CD14-positive monocyte (primary cell): ENCODE measurements at regions of chr17 and their contacts with region 1.

Region 1: GRCh38 chr17:40317880-40318829 is 9.2 kb downstream of the RARA start:
- DNase-seq: peak; percentile 94 to 96 (median 95)
- H3K4me3 ChIP-seq: peak overlapping the region; percentile 75 to 100 (median 100)
- H3K4me3 Mint-ChIP-seq: peak overlapping the region; percentile 99
- H3K27ac ChIP-seq: peak overlapping the region; percentile 99 to 100
- H3K27ac Mint-ChIP-seq: peak overlapping the region; percentile 99 to 100 (median 100)
- H3K4me1 ChIP-seq: peaks cover 65 to 69% of the 10 kb centered on the region in 2 donors
- H3K4me1 Mint-ChIP-seq: peaks cover 55% of the 10 kb centered on the region
- H3K27me3 ChIP-seq: no peaks in the 10 kb centered on the region
- H3K27me3 Mint-ChIP-seq: peaks cover 0 to 14% (median 7%) of the 10 kb centered on the region in 3 donors
- CTCF ChIP-seq: no peak

Region 2: DNA sequence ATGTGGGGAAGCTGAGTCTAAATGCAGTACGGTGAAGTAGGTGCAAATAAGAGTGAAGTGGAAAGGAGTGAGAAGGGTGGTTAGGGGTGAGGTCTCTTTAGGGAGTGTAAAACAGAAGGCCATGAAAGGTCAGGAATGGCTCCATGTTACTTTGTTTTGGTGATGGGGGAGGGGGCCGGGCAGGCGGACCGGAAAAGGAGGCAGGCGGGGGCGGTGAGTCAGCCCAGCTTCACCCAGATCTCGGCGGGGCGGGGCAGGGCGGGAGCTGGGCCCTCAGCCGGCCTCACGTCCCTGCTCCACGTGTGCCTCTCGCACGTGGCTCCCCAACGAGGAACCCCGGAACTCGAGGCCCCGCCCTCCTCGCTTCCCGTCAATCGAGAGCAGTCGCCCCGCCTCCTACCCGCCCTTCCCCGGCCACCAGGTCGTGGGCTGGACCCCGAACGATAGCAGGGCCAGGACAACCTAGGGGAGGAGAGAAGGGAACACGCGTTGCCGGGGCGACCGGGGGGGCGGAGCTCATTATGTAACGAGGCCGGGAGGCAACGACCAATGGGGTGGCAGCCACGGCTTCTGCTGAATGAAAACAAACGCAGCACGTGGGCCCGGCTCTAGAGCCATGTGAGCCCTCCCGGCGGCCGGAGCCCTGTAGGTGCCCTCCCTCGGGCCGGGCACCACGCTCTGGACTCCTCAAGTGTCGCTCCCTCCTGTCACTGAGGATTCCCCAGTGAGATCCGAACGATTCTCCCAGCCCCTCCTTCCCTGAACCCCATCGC is 219.1 kb before region 1 on chr17:
- intact Hi-C with region 1: loop called (anchors 2 to 5 kb)
- DNase-seq: peak; percentile 99 to 100 (median 100)
- H3K4me3 ChIP-seq: peak overlapping the region; percentile 35 to 78 (median 36)
- H3K4me3 Mint-ChIP-seq: peak overlapping the region; percentile 87 to 95
- H3K27ac ChIP-seq: peak overlapping the region; percentile 78 to 98
- H3K27ac Mint-ChIP-seq: peak overlapping the region; percentile 96 to 99 (median 98)
- H3K4me1 ChIP-seq: peaks cover 68 to 70% of the 10 kb centered on the region in 2 donors
- H3K4me1 Mint-ChIP-seq: peaks cover 79% of the 10 kb centered on the region
- H3K27me3 ChIP-seq: no peaks in the 10 kb centered on the region
- H3K27me3 Mint-ChIP-seq: peaks cover 0 to 5% (median 0%) of the 10 kb centered on the region in 3 donors
- CTCF ChIP-seq: no peak

Region 3: GRCh38 chr17:40279407-40279806 is 38.7 kb before region 1 on chr17:
- intact Hi-C with region 1: no loop called
- DNase-seq: no peak
- H3K4me3 ChIP-seq: no peak overlapping the region
- H3K4me3 Mint-ChIP-seq: no peak overlapping the region
- H3K27ac ChIP-seq: peak overlapping the region in 1 of 2 donors; percentile 36
- H3K27ac Mint-ChIP-seq: peak overlapping the region in 2 of 7 donors; percentile 36 to 67
- H3K4me1 ChIP-seq: peaks cover 18% of the 10 kb centered on the region in 2 donors
- H3K4me1 Mint-ChIP-seq: peaks cover 13% of the 10 kb centered on the region
- H3K27me3 ChIP-seq: no peaks in the 10 kb centered on the region
- H3K27me3 Mint-ChIP-seq: no peaks in the 10 kb centered on the region
- CTCF ChIP-seq: no peak

Region 4: DNA sequence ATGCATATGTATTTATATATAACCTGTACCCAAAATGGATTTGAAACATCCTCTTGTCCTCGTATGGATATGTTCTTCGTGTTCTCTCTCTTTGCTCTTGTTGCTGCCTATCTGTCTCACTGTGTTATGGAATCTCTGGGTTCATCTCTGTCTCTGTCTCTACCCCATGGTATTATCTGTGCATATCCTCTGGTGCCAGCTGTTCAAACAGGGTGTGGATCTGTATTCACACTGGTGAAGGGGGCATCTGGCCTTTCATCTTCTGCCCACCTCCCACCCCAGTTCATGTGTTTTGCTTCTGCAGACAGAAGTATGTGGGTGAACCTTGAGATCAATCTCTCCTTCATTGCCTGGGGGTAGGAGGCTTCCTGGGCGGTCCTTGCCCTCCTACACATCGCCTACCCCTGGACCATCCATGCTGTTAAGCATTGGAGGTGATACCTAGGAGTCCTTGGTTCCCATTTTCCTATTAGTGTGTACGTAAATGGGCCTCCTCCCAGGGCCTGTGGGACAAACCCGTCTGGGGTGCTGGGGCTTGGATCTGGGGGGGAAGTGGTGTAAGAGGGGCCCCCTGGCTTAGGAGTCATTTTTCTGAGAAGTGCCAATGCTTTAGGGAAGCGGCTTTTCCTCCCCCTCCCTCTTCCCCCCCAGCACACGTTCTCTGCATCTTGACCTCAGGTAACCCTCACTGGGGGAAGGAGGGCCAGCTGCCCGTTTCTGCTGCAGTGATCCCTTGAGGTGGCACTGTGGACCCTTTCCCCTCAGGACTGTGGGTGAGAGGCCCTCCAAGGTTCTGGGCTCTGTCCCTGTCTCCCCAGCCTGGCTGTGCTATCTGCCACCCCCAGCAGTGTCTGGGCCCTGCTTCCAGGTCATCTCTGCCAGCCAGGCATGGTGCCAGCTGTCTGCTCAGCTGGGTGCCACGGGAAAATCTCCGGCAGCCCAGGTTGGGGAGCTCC is 12.0 kb after region 1 on chr17:
- intact Hi-C with region 1: loop called in 1 of 2 experiments (anchors 1 kb)
- DNase-seq: peak; percentile 86 to 91 (median 88)
- H3K4me3 ChIP-seq: peak overlapping the region; percentile 1 to 69 (median 24)
- H3K4me3 Mint-ChIP-seq: peak overlapping the region; percentile 75 to 78
- H3K27ac ChIP-seq: peak overlapping the region; percentile 74 to 100
- H3K27ac Mint-ChIP-seq: peak overlapping the region; percentile 93 to 100 (median 99)
- H3K4me1 ChIP-seq: peaks cover 100% of the 10 kb centered on the region in 2 donors
- H3K4me1 Mint-ChIP-seq: peaks cover 97% of the 10 kb centered on the region
- H3K27me3 ChIP-seq: no peaks in the 10 kb centered on the region
- H3K27me3 Mint-ChIP-seq: peaks cover 0 to 3% (median 1%) of the 10 kb centered on the region in 3 donors
- CTCF ChIP-seq: no peak

Region 5: GRCh38 chr17:40340880-40341807 is 23.0 kb after region 1 on chr17:
- intact Hi-C with region 1: loop called (anchors 2 kb)
- DNase-seq: peak; percentile 97 to 98 (median 98)
- H3K4me3 ChIP-seq: peak overlapping the region; percentile 66 to 99 (median 90)
- H3K4me3 Mint-ChIP-seq: peak overlapping the region; percentile 84 to 99
- H3K27ac ChIP-seq: peak overlapping the region; percentile 94 to 97
- H3K27ac Mint-ChIP-seq: peak overlapping the region; percentile 88 to 97 (median 95)
- H3K4me1 ChIP-seq: peaks cover 81 to 83% of the 10 kb centered on the region in 2 donors
- H3K4me1 Mint-ChIP-seq: peaks cover 70% of the 10 kb centered on the region
- H3K27me3 ChIP-seq: no peaks in the 10 kb centered on the region
- H3K27me3 Mint-ChIP-seq: peaks cover 2 to 4% (median 3%) of the 10 kb centered on the region in 3 donors
- CTCF ChIP-seq: peak; percentile 34

Region 6: DNA sequence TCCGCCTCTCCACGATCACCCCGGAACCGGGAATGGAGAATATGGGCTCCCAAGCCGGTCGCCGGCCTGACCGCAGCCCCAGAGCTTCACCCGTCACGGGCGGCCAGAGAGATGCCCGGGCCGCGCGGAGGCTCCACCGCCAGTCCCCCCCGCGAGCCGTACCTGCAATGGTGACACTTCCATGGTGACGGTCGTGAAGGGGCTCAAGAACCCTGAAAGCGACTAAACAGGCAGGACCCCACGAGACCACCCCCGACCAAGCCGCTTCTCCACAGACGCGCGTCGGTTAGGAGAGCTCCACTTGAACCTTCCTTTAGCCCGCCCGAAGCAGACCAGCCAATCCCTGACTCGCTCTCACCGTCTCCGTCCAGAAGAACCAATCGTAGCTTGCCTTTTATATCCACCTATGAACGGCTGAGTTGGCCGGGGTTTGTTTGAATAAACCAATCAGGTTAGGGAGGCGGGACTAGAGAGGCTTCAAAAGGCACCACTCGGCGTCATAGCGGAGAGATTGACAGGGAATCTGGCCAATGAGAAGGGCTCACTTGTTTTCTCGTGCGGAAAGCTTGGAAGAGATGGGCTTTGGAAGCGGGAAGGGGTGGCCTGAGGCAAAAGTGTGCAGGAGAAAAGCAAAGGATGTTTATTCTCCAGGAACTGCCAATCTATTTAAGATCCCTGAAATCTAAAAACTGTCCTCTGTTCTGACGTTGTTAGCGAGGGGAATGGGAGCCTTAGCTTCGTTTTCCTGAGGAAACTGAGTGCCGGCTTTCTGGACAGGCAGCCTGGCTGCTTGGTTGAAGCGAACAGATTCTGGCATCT is 99.7 kb after region 1 on chr17 and contains the start of gene TOP2A:
- intact Hi-C with region 1: no loop called
- DNase-seq: peak; percentile 98 to 100 (median 99)
- H3K4me3 ChIP-seq: peak within 1 kb of the TSS; percentile 60 to 92 (median 82)
- H3K4me3 Mint-ChIP-seq: peak within 1 kb of the TSS; percentile 98 to 100
- H3K27ac ChIP-seq: peak within 1 kb of the TSS in 1 of 2 donors; percentile 79
- H3K27ac Mint-ChIP-seq: peak within 1 kb of the TSS; percentile 74 to 91 (median 79)
- H3K4me1 ChIP-seq: peaks cover 39 to 47% of the 10 kb centered on the region in 2 donors
- H3K4me1 Mint-ChIP-seq: peaks cover 35% of the 10 kb centered on the region
- H3K27me3 ChIP-seq: no peaks in the 10 kb centered on the region
- H3K27me3 Mint-ChIP-seq: peaks cover 0 to 2% (median 2%) of the 10 kb centered on the region in 3 donors
- CTCF ChIP-seq: no peak
- polyA plus RNA-seq, gene TOP2A: 0.01 to 0.94 (median 0.28) TPM